Tibial artery (tissue), 4 donors: ENCODE measurements at regions of chr19 and their contacts with region 1.

Region 1: DNA sequence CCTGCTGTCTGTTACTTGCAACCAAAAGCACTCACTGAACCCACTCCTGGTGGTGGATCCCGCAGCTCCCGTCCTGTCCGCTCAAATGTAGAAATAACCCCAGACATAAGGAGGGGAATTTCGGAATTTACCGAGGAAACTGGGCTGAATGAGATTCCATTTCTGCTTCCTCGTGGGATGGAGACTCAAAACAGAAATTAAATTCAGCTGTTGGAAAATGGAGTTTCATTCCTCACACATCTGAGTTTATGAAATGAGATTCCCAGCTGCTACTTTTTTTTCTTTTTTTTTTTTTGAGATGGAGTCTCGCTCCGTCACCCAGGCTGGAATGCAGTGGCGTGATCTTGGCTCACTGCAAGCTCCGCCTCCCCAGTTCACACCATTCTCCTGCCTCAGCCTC is 44.3 kb downstream of the COLGALT1 start:
- DNase-seq: no peak
- H3K4me3 ChIP-seq: no peak overlapping the region
- H3K27ac ChIP-seq: no peak overlapping the region
- H3K4me1 ChIP-seq: no peaks in the 10 kb centered on the region
- H3K27me3 ChIP-seq: peaks cover 0 to 49% of the 10 kb centered on the region in 2 donors
- CTCF ChIP-seq: no peak

Region 2: GRCh38 chr19:17618936-17619335 is 19.2 kb after region 1 on chr19:
- intact Hi-C with region 1: no loop called
- DNase-seq: no peak
- H3K4me3 ChIP-seq: no peak overlapping the region
- H3K27ac ChIP-seq: no peak overlapping the region
- H3K4me1 ChIP-seq: peaks cover 0 to 11% (median 6%) of the 10 kb centered on the region in 4 donors
- H3K27me3 ChIP-seq: peaks cover 0 to 59% of the 10 kb centered on the region in 2 donors
- CTCF ChIP-seq: no peak

Region 3: DNA sequence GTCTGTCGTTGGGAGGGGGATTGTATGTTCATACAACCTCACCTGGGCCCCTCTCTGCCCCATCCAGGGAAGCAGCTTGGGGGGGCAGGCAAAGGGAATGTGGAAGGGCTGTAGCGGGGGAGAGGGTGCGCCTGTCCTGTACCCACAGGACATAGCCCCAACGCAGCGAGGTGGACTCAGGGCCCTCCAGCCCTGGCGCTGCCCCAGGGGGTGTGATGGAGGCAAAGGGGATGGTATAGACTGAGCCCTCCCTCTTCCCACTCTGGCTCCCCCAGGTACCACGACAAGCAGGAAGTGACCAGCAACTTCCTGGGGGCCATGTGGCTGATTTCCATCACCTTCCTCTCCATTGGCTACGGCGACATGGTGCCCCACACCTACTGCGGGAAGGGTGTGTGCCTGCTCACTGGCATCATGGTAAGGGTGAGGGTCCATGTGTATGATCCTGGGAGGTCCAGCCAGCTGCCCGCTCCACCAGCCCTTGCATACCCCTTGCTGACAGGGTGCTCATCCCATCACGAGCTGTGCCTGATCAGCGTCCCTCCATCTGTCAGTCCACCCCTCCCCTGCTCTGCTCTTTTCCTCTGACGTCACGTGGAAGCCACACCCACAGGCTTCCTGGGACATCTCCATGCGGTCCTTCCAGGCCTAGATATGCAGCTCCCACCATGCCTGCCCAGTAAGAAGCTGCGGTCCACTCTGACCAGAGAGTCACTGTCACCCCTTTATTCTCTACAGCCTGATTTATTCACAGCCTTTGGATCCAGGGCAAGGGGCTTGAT is 385.4 kb after region 1 on chr19:
- intact Hi-C with region 1: loop called (anchors 10 kb)
- DNase-seq: no peak
- H3K4me3 ChIP-seq: no peak overlapping the region
- H3K27ac ChIP-seq: no peak overlapping the region
- H3K4me1 ChIP-seq: no peaks in the 10 kb centered on the region
- H3K27me3 ChIP-seq: peaks cover 0 to 40% of the 10 kb centered on the region in 2 donors
- CTCF ChIP-seq: no peak